ENCODE measurements at regions of chr15 and their contacts with region 1.

Region 1: GRCh38 chr15:78750566-78750965 is 60.7 kb downstream of the ADAMTS7 start:
- DNase-seq: peak; percentile 11
- H3K4me3 ChIP-seq: no peak overlapping the region
- H3K27ac ChIP-seq: no peak overlapping the region
- H3K4me1 ChIP-seq: no peaks in the 10 kb centered on the region
- H3K27me3 ChIP-seq: no peaks in the 10 kb centered on the region
- CTCF ChIP-seq: no peak

Region 2: GRCh38 chr15:78241007-78241406 is 509.6 kb before region 1 on chr15:
- intact Hi-C with region 1: no loop called
- DNase-seq: peak; percentile 94
- H3K4me3 ChIP-seq: no peak overlapping the region
- H3K27ac ChIP-seq: no peak overlapping the region
- H3K4me1 ChIP-seq: no peaks in the 10 kb centered on the region
- H3K27me3 ChIP-seq: no peaks in the 10 kb centered on the region
- CTCF ChIP-seq: peak; percentile 85

Region 3: GRCh38 chr15:78340231-78341056 is 410.1 kb before region 1 on chr15 and contains the start of gene CRABP1:
- intact Hi-C with region 1: no loop called
- DNase-seq: no peak
- H3K4me3 ChIP-seq: no peak within 1 kb of the TSS
- H3K27ac ChIP-seq: no peak within 1 kb of the TSS
- H3K4me1 ChIP-seq: peaks cover 5% of the 10 kb centered on the region
- H3K27me3 ChIP-seq: peaks cover 30% of the 10 kb centered on the region
- CTCF ChIP-seq: no peak
- total RNA-seq, gene CRABP1: 1.3 to 1.5 TPM

Region 4: DNA sequence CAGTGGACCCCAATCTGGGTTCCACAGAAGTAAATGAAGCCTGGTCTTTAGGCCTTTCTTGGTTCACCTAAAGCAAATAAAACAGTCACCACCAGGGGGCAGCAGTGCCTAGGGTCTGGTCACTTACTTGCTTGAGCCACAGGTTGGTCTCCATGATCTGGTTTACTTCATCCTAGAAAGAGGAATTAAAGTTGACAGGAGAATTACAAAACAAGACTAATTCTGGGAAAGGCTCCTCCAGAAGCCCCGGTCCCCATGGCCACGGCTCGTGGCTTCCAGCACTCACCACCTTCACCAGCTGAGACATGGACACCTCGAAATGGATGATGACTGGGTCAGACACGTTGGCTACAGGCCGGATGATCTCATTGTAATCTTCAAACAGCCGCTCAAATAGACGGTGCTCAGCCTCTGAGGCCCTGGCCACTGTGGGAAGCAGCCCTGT is 132.1 kb before region 1 on chr15:
- intact Hi-C with region 1: loop called (anchors 5 kb)
- DNase-seq: peak; percentile 94
- H3K4me3 ChIP-seq: no peak overlapping the region
- H3K27ac ChIP-seq: no peak overlapping the region
- H3K4me1 ChIP-seq: no peaks in the 10 kb centered on the region
- H3K27me3 ChIP-seq: peaks cover 34% of the 10 kb centered on the region
- CTCF ChIP-seq: peak; percentile 79